Endothelial cell of umbilical vein (primary cell): ENCODE measurements at regions of chr16 and their contacts with region 1.

Region 1: DNA sequence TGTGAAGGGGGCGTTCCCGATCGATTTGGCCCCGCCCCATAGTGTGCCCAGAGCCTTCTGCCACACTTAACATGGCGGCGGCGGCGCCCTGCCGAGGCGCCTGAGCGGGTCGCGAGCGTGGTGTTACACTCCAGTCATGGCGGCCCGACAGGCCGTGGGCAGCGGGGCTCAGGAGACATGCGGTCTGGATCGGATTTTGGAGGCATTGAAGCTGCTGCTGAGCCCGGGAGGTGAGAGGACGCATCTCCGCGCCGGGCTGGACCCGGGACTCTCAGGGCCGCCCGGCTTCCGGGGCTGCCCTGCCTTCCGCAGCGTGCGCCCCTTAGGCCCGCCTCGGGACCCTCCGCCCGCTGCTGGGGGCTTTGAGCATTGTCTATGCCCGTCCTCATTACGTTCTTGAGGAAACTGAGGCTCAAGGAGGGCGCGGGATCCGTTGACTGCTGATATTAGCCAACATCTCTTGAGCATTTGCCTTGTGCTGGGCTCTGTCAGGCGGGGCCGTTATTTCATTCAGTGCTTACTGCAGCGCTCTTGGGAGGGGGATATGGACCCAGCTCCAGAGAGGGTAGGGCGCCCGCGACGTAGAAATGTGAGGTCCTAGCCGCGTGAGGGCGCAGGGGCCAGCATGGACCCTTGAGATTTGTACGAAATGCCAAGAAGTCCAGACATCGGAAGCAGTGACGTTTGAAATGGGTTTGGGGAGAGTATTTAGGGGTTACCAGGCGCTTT is at the start of gene TANGO6:
- DNase-seq: peak; percentile 86
- H3K4me3 ChIP-seq: peak within 1 kb of the TSS; percentile 86 to 99 (median 96)
- H3K27ac ChIP-seq: peak within 1 kb of the TSS; percentile 76
- H3K4me1 ChIP-seq: peaks cover 7% of the 10 kb centered on the region
- H3K27me3 ChIP-seq: no peaks in the 10 kb centered on the region
- CTCF ChIP-seq: peak; percentile 23 to 60
- POLR2A ChIP-seq: peak; percentile 89
- total RNA-seq, gene TANGO6: 14.3 and 21.2 TPM in 2 replicates

Region 2: GRCh38 chr16:68590201-68590994 is 253.2 kb before region 1 on chr16:
- CTCF ChIA-PET with region 1: interaction called, 11 read pairs
- POLR2A ChIA-PET with region 1: no interaction called
- dilution Hi-C with region 1: no loop called
- intact Hi-C with region 1: loop called (anchors 5 kb)
- DNase-seq: peak; percentile 38
- H3K4me3 ChIP-seq: no peak overlapping the region
- H3K27ac ChIP-seq: no peak overlapping the region
- H3K4me1 ChIP-seq: no peaks in the 10 kb centered on the region
- H3K27me3 ChIP-seq: no peaks in the 10 kb centered on the region
- CTCF ChIP-seq: peak; percentile 58 to 79
- POLR2A ChIP-seq: no peak

Region 3: DNA sequence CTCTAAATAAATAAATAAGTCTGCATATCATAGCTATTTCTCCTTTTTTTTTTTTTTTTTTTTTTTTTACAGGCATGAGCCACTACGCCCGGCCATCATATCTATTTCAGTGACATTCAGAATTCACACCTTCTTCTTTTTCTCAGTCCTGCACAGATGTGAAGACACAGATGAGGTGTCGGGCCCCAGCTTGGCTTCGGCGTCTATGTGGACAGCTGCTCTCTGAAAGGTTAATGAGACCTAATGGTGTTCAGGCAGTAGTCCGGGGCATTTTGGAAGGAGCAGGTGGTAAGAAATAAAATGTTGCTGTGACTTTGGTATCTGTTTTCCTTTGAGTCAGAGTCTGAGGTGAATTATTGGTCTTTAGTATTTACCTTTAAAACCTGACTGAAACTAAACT is 23.3 kb after region 1 on chr16:
- CTCF ChIA-PET with region 1: interaction called, 11 read pairs
- POLR2A ChIA-PET with region 1: no interaction called
- dilution Hi-C with region 1: no loop called
- intact Hi-C with region 1: no loop called
- DNase-seq: no peak
- H3K4me3 ChIP-seq: no peak overlapping the region
- H3K27ac ChIP-seq: no peak overlapping the region
- H3K4me1 ChIP-seq: no peaks in the 10 kb centered on the region
- H3K27me3 ChIP-seq: no peaks in the 10 kb centered on the region
- CTCF ChIP-seq: no peak
- POLR2A ChIP-seq: no peak

Region 4: GRCh38 chr16:69105489-69106361 is 262.1 kb after region 1 on chr16 and contains the start of gene HAS3:
- CTCF ChIA-PET with region 1: interaction called, 19 read pairs
- POLR2A ChIA-PET with region 1: no interaction called
- dilution Hi-C with region 1: no loop called
- intact Hi-C with region 1: loop called (anchors 1 kb)
- DNase-seq: peak; percentile 69
- H3K4me3 ChIP-seq: peak within 1 kb of the TSS; percentile 40 to 57 (median 54)
- H3K27ac ChIP-seq: no peak within 1 kb of the TSS
- H3K4me1 ChIP-seq: peaks cover 21% of the 10 kb centered on the region
- H3K27me3 ChIP-seq: no peaks in the 10 kb centered on the region
- CTCF ChIP-seq: peak; percentile 16 to 32
- POLR2A ChIP-seq: peak; percentile 57
- total RNA-seq, gene HAS3: 1.8 TPM in 2 replicates

Region 5: GRCh38 chr16:69123910-69124309 is 280.3 kb after region 1 on chr16:
- CTCF ChIA-PET with region 1: interaction called, 114 read pairs
- POLR2A ChIA-PET with region 1: no interaction called
- dilution Hi-C with region 1: no loop called
- intact Hi-C with region 1: loop called (anchors 1 kb)
- DNase-seq: peak; percentile 68
- H3K4me3 ChIP-seq: no peak overlapping the region
- H3K27ac ChIP-seq: no peak overlapping the region
- H3K4me1 ChIP-seq: peaks cover 3% of the 10 kb centered on the region
- H3K27me3 ChIP-seq: no peaks in the 10 kb centered on the region
- CTCF ChIP-seq: peak; percentile 49
- POLR2A ChIP-seq: peak; percentile 26

Region 6: DNA sequence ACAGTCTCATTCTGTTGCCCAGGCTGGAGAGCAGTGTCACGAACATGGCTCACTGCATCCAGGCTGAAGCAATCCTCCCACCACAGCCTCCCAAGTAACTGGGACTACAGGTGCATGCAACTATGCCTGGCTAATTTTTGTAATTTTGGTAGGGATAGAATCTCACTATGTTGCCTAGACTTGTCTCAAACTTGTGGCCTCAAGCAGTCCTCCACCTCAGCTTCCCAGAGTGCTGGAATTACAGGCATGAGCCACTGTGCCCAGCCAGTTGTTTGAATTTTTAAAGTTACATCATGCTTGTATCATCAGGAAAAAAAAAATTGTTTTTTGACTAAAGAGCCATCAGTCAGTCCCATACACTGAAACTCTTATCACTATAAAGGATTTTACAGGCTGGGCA is 450.4 kb after region 1 on chr16:
- CTCF ChIA-PET with region 1: no interaction called
- POLR2A ChIA-PET with region 1: no interaction called
- dilution Hi-C with region 1: no loop called
- intact Hi-C with region 1: loop called (anchors 10 kb)
- DNase-seq: no peak
- H3K4me3 ChIP-seq: no peak overlapping the region
- H3K27ac ChIP-seq: no peak overlapping the region
- H3K4me1 ChIP-seq: peaks cover 3% of the 10 kb centered on the region
- H3K27me3 ChIP-seq: no peaks in the 10 kb centered on the region
- CTCF ChIP-seq: no peak
- POLR2A ChIP-seq: no peak